ENCODE measurements at regions of chr12 and their contacts with region 1.

Region 1: GRCh38 chr12:58554522-58555157 is 365.7 kb downstream of the LRIG3 start:
- DNase-seq: no peak
- H3K4me3 ChIP-seq: no peak overlapping the region
- H3K27ac ChIP-seq: no peak overlapping the region
- H3K4me1 ChIP-seq: no peaks in the 10 kb centered on the region
- H3K27me3 ChIP-seq: peaks cover 9% of the 10 kb centered on the region; the same call in 1 of the 2 replicates
- CTCF ChIP-seq: no peak
- EP300 ChIP-seq: no peak
- RAD21 ChIP-seq: no peak

Region 2: DNA sequence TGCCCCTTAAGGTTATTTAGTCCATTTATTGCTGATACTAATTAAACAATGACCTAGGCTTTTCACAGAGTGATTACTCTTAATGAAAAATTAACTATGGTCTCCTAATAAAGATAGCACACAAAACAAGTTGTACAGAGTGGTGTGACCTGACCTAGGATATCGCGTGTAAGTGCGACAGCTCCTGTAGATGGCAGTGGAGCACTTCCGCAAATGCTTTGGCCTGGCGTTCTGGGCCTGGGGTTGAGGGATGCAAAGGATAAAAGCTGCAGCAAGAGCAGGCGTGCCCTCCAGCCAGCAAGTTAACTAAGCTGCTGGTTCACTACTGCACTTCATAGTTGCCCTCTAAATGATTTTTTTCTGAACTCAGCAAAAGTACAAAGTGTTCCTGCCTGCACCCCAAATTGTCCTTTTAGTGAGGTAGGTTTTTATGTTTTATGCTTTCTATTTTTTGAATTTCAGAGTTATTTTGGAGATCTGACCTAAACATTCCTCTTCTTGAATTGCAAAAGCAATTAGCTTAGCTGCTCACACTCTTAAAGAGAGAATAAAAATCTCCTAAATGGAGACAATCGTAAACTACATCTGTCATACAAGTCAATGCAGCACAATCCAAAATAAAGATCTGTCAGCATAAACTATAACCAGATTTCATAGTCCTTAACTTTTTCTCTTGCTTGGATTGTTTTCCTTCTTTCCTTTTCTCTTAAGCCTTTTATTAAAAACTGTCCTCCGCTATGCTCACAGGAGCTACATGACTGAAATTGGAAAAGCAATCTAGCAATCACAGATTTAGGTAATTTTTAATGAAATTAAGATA is 13.9 kb before region 1 on chr12:
- CTCF ChIA-PET with region 1: interaction called, 32 read pairs
- POLR2A ChIA-PET with region 1: no interaction called
- DNase-seq: peak; percentile 36
- H3K4me3 ChIP-seq: no peak overlapping the region
- H3K27ac ChIP-seq: no peak overlapping the region
- H3K4me1 ChIP-seq: 0 out of 4 replicates have a peak, but pooled peaks cover 0 to 3% of the 10 kb centered on the region in 2 experiments
- H3K27me3 ChIP-seq: no peaks in the 10 kb centered on the region; the same call in 1 of the 2 replicates
- CTCF ChIP-seq: peak; percentile 83
- EP300 ChIP-seq: no peak
- RAD21 ChIP-seq: peak; percentile 94